ENCODE measurements at regions of chr11 and their contacts with region 1.

Region 1: GRCh38 chr11:87878373-87878779 is 296.9 kb downstream of the RAB38 start:
- DNase-seq: peak; percentile 57
- ATAC-seq: peak; percentile 72
- H3K4me3 ChIP-seq: no peak overlapping the region
- H3K27ac ChIP-seq: no peak overlapping the region
- H3K4me1 ChIP-seq: no peaks in the 10 kb centered on the region
- H3K27me3 ChIP-seq: no peaks in the 10 kb centered on the region
- CTCF ChIP-seq: peak; percentile 58
- POLR2A ChIP-seq: no peak
- RAD21 ChIP-seq: peak; percentile 57

Region 2: GRCh38 chr11:87463486-87464102 is 414.8 kb before region 1 on chr11:
- CTCF ChIA-PET with region 1: no interaction called
- POLR2A ChIA-PET with region 1: no interaction called
- dilution Hi-C with region 1: no loop called
- in situ Hi-C with region 1: no loop called
- intact Hi-C with region 1: loop called (anchors 10 kb)
- DNase-seq: peak; percentile 36
- ATAC-seq: 0 out of 2 replicates have a peak, but pooled peaks have one; percentile 51
- H3K4me3 ChIP-seq: no peak overlapping the region
- H3K27ac ChIP-seq: no peak overlapping the region
- H3K4me1 ChIP-seq: no peaks in the 10 kb centered on the region
- H3K27me3 ChIP-seq: no peaks in the 10 kb centered on the region
- CTCF ChIP-seq: peak; percentile 47
- POLR2A ChIP-seq: no peak
- RAD21 ChIP-seq: peak; percentile 60